Right ventricle myocardium inferior (tissue), 1 donor: ENCODE measurements at regions of chr10 and their contacts with region 1.

Region 1: DNA sequence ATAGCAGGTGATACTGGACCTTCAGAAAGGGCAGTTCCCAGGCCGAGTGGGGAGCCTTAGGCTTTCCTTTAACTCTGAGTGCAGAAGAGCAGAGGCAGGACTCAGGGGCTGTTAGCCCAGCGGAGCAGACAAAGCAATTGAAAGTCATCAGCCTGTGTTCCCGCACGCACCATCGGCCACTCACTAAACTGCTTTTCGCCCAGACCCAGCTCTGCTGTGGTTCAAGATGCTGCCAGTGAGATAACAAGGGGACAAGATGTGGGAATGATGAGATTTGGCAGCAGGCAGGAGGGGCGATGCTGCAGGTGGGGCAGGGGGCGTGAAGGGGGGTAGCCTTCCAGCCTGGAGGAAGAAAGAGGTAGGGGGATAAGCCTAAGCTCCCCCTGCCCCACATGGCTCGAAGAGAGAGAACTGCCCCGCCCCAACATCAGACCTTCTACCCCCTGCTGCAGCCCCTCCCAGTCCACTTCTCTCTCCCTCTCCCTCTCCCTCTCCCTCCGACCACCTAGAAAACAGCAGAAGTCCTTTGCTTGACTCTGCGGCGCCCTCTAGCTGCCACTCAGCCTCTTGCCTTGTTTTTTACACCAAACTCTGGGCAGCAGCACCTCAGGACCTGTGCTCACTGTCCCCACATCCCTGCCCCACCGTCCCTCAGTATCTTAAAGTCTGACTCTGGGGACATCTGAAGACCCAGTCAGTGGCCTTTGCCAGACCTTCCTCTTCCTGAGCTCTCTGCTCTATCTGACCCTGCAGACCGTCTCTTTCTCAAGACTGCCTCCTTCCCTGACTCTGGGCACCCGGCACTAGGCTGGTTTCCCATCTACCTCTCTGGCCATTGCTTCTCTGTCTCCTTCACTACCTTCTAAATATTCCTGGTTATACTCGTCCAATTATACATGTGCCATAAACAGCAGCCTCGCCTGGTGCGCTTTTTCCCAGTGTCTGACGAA is 110.5 kb downstream of the C10orf105 start:
- DNase-seq: peak; percentile 88
- ATAC-seq: peak; percentile 57

Region 2: GRCh38 chr10:70440296-70441160 is 1168.6 kb before region 1 on chr10:
- intact Hi-C with region 1: no loop called
- DNase-seq: peak; percentile 57
- ATAC-seq: no peak

Region 3: DNA sequence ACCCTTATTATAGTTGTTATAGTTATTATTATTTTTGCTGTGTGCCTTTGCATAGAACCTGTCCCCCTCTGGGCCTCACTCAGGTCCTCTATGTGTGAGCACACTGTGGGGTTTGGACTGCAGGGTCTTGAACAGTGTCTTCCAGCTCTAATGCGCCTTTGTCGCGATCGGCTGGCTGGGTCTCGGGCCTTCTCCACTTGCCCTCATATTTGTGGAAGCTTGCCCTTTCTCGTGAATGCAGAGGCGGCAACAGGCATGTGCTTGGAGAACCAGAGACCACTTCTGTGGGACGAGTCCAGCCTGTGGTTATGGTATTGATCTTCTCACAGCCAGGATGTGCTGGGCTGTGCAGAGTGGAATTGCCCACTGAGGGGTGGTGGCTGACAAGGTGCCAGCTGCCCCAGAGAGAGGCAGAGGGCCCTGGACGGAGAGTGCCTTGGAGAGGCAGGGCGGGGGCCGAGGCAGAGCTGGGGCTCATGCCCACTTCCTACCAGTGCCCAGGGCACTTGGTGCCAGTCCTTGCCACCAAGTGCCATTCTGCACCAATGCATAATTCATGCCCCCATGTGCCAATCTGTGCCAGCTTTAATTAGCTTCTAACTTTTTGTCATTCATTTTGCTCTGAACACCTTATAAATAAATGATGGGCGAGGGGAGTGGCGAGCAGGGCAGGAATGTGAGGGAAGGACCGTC is 219.2 kb before region 1 on chr10:
- intact Hi-C with region 1: loop called (anchors 5 kb)
- DNase-seq: no peak
- ATAC-seq: no peak

Region 4: GRCh38 chr10:71486484-71487114 is 122.5 kb before region 1 on chr10:
- intact Hi-C with region 1: no loop called
- DNase-seq: no peak
- ATAC-seq: no peak